Heart left ventricle (tissue), 16 donors: ENCODE measurements at regions of chr12 and their contacts with region 1.

Region 1: DNA sequence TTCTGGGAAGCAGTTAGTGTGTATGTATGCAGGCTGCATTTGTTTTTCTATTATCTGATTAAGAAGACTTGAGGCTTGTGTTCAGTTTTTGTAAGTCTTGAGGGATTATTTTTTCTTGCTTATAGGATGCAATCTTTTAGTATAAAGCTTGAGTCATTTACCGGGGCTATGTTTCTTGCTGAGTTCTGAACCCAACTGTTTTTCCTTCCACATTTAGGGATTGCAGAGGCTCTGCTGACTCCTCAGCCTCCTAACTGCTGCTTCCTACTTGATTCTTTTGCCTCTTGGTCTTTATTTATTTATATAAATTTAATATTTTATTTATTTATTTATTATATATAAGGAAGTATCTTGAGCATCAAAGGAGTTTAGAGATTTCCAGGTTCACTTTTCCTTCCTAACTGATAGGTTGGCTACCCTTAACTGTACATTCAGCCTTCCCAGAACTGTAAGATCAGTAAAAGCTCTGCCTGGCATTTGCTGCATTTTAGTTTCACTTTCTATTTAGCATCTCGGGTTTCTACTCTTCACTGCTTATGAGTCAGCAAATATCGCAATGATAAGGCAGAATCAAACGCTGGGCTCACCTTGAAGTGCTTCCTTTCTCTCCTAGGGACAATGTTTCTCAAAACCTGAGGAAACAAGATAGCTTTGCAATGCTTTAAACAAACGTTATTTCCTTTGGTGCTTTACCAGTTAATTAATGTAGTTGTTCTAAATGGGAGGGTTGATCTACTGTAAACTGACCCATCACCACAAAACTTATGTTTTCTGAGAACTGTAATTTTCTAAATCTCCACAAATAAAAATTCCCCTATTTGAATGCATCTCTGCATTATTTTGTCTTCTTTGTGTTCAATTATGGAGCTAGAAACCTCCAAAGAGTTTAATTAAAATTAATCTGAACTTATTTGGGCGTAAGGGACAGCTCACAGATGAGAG is 1183.7 kb upstream of the TMEM132C start:
- DNase-seq: no peak
- ATAC-seq: peak in 3 of 4 donors; percentile 71 to 81 (median 74)
- H3K4me3 ChIP-seq: peak overlapping the region in 11 of 12 donors; percentile 3 to 56 (median 47)
- H3K27ac ChIP-seq: peak overlapping the region in 3 of 12 donors; percentile 8 to 45 (median 24)
- H3K4me1 ChIP-seq: peaks cover 0 to 16% (median 2%) of the 10 kb centered on the region in 12 donors
- H3K27me3 ChIP-seq: peaks cover 0 to 3% (median 0%) of the 10 kb centered on the region in 9 donors
- CTCF ChIP-seq: no peak
- POLR2A ChIP-seq: no peak

Region 2: GRCh38 chr12:126648074-126648473 is 435.2 kb before region 1 on chr12:
- intact Hi-C with region 1: no loop called
- DNase-seq: no peak
- ATAC-seq: no peak
- H3K4me3 ChIP-seq: no peak overlapping the region
- H3K27ac ChIP-seq: no peak overlapping the region
- H3K4me1 ChIP-seq: no peaks in the 10 kb centered on the region
- H3K27me3 ChIP-seq: no peaks in the 10 kb centered on the region
- CTCF ChIP-seq: no peak
- POLR2A ChIP-seq: no peak

Region 3: DNA sequence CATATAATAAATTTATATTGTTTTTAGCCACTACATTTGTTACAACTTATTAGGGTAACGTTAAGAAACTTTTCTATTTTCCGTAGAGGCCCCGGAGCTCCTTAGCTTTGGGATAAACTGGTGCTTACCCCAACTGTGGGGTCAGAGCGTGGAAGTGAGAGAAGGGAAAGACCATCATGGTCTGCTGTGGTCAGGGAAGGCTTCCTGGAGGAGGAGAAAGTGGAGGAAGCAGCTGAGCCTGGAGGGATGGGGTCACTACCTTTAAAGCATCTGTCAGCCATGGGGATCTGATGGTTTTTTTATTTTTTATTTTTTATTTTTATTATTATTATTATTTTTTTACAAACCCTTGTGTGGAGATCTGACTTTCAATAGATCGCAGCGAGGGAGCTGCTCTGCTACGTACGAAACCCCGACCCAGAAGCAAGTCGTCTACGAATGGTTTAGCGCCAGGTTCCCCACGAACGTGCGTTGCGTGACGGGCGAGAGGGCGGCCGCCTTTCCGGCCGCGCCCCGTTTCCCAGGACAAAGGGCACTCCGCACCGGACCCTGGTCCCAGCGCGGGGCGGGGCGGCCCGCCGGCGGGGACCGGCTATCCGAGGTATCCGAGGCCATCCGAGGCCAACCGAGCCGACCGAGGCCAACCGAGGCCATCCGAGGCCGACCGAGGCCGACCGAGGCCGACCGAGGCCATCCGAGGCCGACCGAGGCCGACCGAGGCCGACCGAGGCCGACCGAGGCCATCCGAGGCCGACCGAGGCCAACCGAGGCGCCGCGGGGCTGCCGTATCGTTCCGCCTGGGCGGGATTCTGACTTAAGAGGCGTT is 82.5 kb after region 1 on chr12:
- intact Hi-C with region 1: loop called in 1 of 10 experiments (anchors 10 kb)
- DNase-seq: peak; percentile 86 to 93 (median 89)
- ATAC-seq: peak; percentile 94 to 99 (median 98)
- H3K4me3 ChIP-seq: peak overlapping the region; percentile 6 to 65 (median 58)
- H3K27ac ChIP-seq: peak overlapping the region; percentile 6 to 87 (median 76)
- H3K4me1 ChIP-seq: peaks cover 0 to 19% (median 0%) of the 10 kb centered on the region in 12 donors
- H3K27me3 ChIP-seq: peaks cover 0 to 6% (median 0%) of the 10 kb centered on the region in 9 donors
- CTCF ChIP-seq: no peak
- POLR2A ChIP-seq: no peak